Left ventricle myocardium superior (tissue), 1 donor: ENCODE measurements at regions of chr18 and their contacts with region 1.

Region 1: GRCh38 chr18:25621144-25621543 is 269.2 kb upstream of the ZNF521 start:
- DNase-seq: no peak
- ATAC-seq: no peak

Region 2: DNA sequence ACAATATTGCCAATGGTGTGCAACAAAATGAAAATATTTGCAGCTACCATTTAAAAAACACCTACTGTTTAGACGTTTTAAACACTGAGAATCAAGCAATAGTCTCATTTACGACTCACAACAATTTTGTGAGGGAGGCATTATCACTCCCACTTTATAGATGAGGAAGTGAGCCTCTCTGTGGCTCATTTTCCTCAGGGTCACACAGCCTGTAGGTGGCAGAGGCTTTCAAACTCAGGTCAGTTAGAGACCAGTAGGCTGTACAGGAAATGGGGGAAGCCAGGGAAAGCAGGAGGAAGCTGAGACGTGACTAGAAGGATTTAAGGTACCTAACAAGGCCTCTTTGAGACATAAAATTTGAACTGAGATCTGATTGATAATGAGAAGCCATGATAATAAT is 174.2 kb before region 1 on chr18:
- intact Hi-C with region 1: loop called (anchors 5 kb)
- DNase-seq: no peak
- ATAC-seq: no peak